PC-9 (cell line): ENCODE measurements at regions of chr2 and their contacts with region 1.

Region 1: GRCh38 chr2:172200495-172201085 is 97.9 kb upstream of the DLX2 start:
- DNase-seq: no peak
- H3K4me3 ChIP-seq: no peak overlapping the region
- H3K27ac ChIP-seq: no peak overlapping the region
- H3K4me1 ChIP-seq: peaks cover 8% of the 10 kb centered on the region
- H3K27me3 ChIP-seq: no peaks in the 10 kb centered on the region
- CTCF ChIP-seq: peak; percentile 84

Region 2: GRCh38 chr2:172246649-172247048 is 46.1 kb after region 1 on chr2:
- CTCF ChIA-PET with region 1: no interaction called
- POLR2A ChIA-PET with region 1: no interaction called
- intact Hi-C with region 1: loop called (anchors 1 kb)
- DNase-seq: peak in 1 of 2 experiments; percentile 46
- H3K4me3 ChIP-seq: no peak overlapping the region
- H3K27ac ChIP-seq: peak overlapping the region; percentile 70
- H3K4me1 ChIP-seq: peaks cover 62% of the 10 kb centered on the region
- H3K27me3 ChIP-seq: no peaks in the 10 kb centered on the region
- CTCF ChIP-seq: no peak

Region 3: GRCh38 chr2:172735582-172736423 is 535.2 kb after region 1 on chr2 and contains the start of gene RAPGEF4:
- CTCF ChIA-PET with region 1: no interaction called
- POLR2A ChIA-PET with region 1: no interaction called
- intact Hi-C with region 1: no loop called
- DNase-seq: peak in 1 of 2 experiments; percentile 18
- H3K4me3 ChIP-seq: peak within 1 kb of the TSS; percentile 40; the same call in 1 of the 2 replicates
- H3K27ac ChIP-seq: no peak within 1 kb of the TSS
- H3K4me1 ChIP-seq: no peaks in the 10 kb centered on the region
- H3K27me3 ChIP-seq: 0 out of 2 replicates have a peak, but pooled peaks cover 2% of the 10 kb centered on the region
- CTCF ChIP-seq: no peak
- total RNA-seq, gene RAPGEF4: 0.53 TPM in 1 of 2 replicates, not detected in the other